H1 (cell line): ENCODE measurements at regions of chr10 and their contacts with region 1.

Region 1: DNA sequence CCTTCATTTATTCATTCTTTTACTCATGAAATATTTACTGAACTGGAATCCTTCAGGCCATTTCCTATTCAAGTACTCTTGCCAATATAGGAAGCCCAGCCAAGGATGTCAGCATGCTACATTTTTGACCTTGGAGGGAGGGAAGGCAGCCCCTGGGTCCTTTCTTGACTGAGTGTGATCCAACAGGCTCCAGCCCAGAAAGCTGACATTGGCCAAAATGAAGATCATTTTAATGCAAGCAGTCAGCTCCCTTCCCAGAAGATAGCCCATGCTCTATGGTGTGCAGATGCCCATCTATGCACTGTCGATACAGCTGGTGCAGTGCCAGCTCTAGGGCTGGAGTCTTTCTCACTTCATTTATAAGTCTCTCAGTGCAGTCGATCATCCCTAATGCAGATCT is 646.0 kb downstream of the KCNMA1 start:
- DNase-seq: no peak
- H3K4me3 ChIP-seq: no peak overlapping the region
- H3K27ac ChIP-seq: no peak overlapping the region
- H3K4me1 ChIP-seq: peaks cover 0 to 4% (median 0%) of the 10 kb centered on the region in 4 experiments; a peak in 1 of 7 replicates
- H3K27me3 ChIP-seq: no peaks in the 10 kb centered on the region
- CTCF ChIP-seq: no peak
- EP300 ChIP-seq: no peak
- POLR2A ChIP-seq: no peak
- RAD21 ChIP-seq: no peak

Region 2: DNA sequence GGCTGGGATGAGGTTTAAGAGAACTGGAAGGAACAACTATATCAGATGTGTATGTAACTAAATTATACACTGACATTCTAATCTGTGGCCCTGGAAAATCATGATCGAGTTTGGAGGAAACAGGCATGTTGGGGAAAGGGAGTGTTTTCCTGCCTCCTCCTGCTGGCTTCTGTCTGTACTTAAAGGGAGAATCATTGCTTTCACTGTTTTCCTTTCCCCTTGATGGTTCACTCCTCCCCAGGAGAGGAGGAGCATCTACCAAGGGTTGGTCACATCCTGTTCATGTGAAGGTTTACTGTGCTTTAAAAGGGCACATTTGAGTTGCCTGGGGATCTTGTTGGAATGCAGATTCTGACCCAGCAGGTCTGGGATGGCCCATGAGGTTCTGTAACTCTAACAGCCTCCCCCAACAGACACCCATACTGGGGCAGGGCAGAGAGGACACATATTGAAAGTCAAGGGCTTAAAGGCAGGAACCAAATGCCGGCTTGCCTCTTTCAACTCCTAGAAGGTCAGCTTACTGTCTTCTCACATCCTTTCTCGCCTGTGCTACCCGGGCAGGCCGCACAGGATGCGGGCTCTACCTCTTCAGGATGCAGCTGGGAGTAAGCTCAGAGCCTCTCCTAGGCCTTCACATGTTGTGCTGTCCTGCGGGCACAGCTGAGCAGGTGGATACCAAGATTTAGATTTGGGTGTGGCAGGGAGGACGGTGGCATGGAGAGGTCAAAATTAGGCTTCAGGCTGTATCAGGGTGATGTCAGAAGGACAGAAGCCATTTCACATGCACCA is 48.8 kb before region 1 on chr10:
- CTCF ChIA-PET with region 1: no interaction called
- POLR2A ChIA-PET with region 1: no interaction called
- DNase-seq: no peak
- H3K4me3 ChIP-seq: no peak overlapping the region
- H3K27ac ChIP-seq: no peak overlapping the region
- H3K4me1 ChIP-seq: peaks cover 0 to 3% (median 1%) of the 10 kb centered on the region in 4 experiments; a peak in 2 of 7 replicates
- H3K27me3 ChIP-seq: no peaks in the 10 kb centered on the region
- CTCF ChIP-seq: no peak
- EP300 ChIP-seq: no peak
- POLR2A ChIP-seq: no peak
- RAD21 ChIP-seq: no peak

Region 3: GRCh38 chr10:77004917-77005564 is 13.4 kb after region 1 on chr10:
- CTCF ChIA-PET with region 1: interaction called, 20 read pairs
- POLR2A ChIA-PET with region 1: interaction called, 3 read pairs
- DNase-seq: peak in 1 of 2 experiments; percentile 47
- H3K4me3 ChIP-seq: no peak overlapping the region
- H3K27ac ChIP-seq: no peak overlapping the region; the same call in 1 of the 2 replicates
- H3K4me1 ChIP-seq: no peaks in the 10 kb centered on the region
- H3K27me3 ChIP-seq: no peaks in the 10 kb centered on the region
- CTCF ChIP-seq: peak in 2 of 3 experiments; percentile 59 to 78; a peak in 3 of 4 replicates
- EP300 ChIP-seq: no peak
- POLR2A ChIP-seq: no peak
- RAD21 ChIP-seq: peak; percentile 86 to 87

Region 4: DNA sequence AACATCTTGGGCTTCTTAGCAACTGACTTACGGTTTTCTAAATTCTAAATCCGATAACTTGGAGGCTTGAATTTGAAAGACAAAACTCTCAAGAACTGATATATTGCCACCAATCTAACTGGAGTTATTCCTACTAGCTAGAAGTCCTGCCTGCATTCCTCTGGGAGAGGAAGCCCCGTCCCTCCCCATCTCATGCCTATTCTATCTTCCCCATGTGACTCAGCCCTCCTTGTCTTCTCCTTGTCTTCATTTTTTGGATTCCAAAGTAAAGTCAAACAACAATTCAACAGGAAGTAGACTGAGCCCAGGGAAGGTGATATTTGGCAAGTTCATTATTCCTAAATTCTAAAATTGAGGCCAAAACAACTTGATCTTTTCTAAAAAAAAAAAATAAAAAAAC is 58.3 kb after region 1 on chr10:
- CTCF ChIA-PET with region 1: no interaction called
- POLR2A ChIA-PET with region 1: no interaction called
- DNase-seq: peak in 1 of 2 experiments; percentile 11
- H3K4me3 ChIP-seq: no peak overlapping the region
- H3K27ac ChIP-seq: no peak overlapping the region
- H3K4me1 ChIP-seq: peaks cover 0 to 4% (median 2%) of the 10 kb centered on the region in 4 experiments; a peak in 3 of 7 replicates
- H3K27me3 ChIP-seq: peaks cover 0 to 1% (median 0%) of the 10 kb centered on the region in 4 experiments; a peak in 1 of 7 replicates
- CTCF ChIP-seq: no peak
- EP300 ChIP-seq: no peak
- POLR2A ChIP-seq: no peak
- RAD21 ChIP-seq: no peak

Region 5: GRCh38 chr10:77082601-77083252 is 91.1 kb after region 1 on chr10:
- CTCF ChIA-PET with region 1: no interaction called
- POLR2A ChIA-PET with region 1: no interaction called
- DNase-seq: peak; percentile 46 to 79
- H3K4me3 ChIP-seq: no peak overlapping the region
- H3K27ac ChIP-seq: no peak overlapping the region
- H3K4me1 ChIP-seq: peaks cover 7 to 18% (median 13%) of the 10 kb centered on the region in 4 experiments
- H3K27me3 ChIP-seq: no peaks in the 10 kb centered on the region
- CTCF ChIP-seq: peak; percentile 68 to 85 (median 70)
- EP300 ChIP-seq: no peak
- POLR2A ChIP-seq: no peak
- RAD21 ChIP-seq: peak; percentile 28 to 46; a peak in 3 of 4 replicates